HEK293 (cell line): ENCODE measurements at regions of chrX and their contacts with region 1.

Region 1: GRCh38 chrX:37825209-37825842 is 22.0 kb downstream of the DYNLT3 start:
- H3K4me3 ChIP-seq: no peak overlapping the region
- H3K27ac ChIP-seq: no peak overlapping the region
- H3K4me1 ChIP-seq: no peaks in the 10 kb centered on the region
- CTCF ChIP-seq: peak; percentile 44; the same call in 1 of the 2 replicates

Region 2: DNA sequence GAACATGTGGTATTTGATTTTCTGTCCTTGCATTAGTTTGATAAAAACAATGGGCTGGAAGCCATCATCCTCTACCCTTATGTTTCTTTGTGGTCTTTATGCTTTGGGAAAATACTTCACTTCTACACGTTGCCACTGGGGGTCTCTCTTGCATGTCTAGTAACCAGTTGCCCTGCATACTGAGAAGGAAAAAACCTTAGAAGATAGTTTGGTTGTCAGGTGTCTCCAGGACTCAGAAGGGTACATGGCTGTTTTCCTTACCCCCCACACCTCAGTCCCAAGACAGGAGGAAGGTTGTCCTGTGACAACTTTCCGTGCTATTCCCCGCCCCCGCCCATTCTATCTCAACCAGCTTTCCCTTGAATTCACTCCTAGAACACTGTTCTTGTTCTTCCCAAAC is 316.0 kb before region 1 on chrX:
- CTCF ChIA-PET with region 1: interaction called, 11 read pairs
- POLR2A ChIA-PET with region 1: no interaction called
- H3K4me3 ChIP-seq: no peak overlapping the region
- H3K27ac ChIP-seq: no peak overlapping the region
- H3K4me1 ChIP-seq: no peaks in the 10 kb centered on the region
- CTCF ChIP-seq: no peak

Region 3: DNA sequence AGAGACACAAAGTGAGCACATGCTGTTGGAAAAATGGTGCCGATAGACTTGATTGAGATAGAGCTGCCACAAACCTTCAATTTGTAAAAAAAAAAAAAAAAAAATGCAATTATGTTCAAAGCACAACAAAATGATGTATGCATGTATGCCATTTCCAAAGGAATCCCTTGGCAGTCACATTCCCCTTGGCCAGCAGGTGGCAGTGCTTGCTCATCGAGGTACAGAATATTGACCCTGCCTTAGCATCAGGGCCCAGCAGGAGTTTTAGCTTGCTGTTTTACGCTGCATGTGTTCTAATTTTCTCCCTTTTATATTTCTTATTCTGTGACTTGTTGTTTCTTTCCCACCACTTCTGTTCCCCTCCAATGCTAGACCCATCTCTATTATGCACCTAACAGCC is 80.0 kb before region 1 on chrX:
- CTCF ChIA-PET with region 1: interaction called, 89 read pairs
- POLR2A ChIA-PET with region 1: no interaction called
- H3K4me3 ChIP-seq: no peak overlapping the region
- H3K27ac ChIP-seq: no peak overlapping the region
- H3K4me1 ChIP-seq: no peaks in the 10 kb centered on the region
- CTCF ChIP-seq: peak; percentile 59

Region 4: DNA sequence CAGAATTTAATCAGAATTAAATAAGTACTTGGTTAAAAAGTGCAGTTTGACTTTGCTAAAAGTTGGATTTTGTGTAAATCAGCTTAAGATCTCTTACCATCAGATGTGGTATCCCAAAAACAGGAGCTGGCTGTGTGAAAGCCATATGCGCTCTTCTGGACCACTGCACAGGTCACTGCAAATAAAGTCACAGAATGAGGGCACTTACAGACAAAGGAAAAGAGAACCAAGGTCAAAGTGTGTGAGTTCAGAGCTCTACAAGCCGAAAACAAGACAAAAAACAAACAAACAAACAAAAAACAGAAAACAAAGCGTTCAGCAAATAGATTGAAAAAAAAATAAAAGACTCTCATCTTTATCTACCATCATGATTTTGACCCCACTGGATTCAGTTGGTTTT is 15.6 kb after region 1 on chrX:
- CTCF ChIA-PET with region 1: interaction called, 18 read pairs
- POLR2A ChIA-PET with region 1: interaction called, 4 read pairs
- H3K4me3 ChIP-seq: no peak overlapping the region
- H3K27ac ChIP-seq: no peak overlapping the region
- H3K4me1 ChIP-seq: no peaks in the 10 kb centered on the region
- CTCF ChIP-seq: no peak

Region 5: DNA sequence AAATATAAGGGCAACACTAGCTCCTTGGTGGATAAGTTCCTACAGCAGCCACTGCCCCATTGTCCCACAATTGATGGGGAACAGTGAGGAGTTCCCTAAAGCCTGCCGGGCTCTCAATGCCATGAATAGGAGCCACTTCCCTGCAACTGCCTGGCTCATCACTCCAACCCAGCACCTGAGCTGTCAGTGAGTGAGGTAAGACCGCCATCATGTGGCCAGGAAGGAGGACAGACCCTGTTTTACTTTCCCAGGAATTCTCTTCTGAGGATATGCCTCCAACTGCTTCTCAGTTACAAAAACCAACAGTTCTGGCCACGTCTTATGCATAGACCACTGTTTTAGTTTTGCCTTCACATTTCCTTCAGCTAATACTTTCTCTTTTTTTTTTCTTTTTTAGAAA is 349.8 kb after region 1 on chrX:
- CTCF ChIA-PET with region 1: interaction called, 13 read pairs
- POLR2A ChIA-PET with region 1: no interaction called
- H3K4me3 ChIP-seq: no peak overlapping the region
- H3K27ac ChIP-seq: no peak overlapping the region
- H3K4me1 ChIP-seq: no peaks in the 10 kb centered on the region
- CTCF ChIP-seq: peak; percentile 90